ENCODE measurements at regions of chr14 and their contacts with region 1.

Region 1: GRCh38 chr14:93939304-93940229 is 12.4 kb downstream of the FAM181A start:
- DNase-seq: peak; percentile 93
- ATAC-seq: peak; percentile 90
- H3K4me3 Mint-ChIP-seq: peak overlapping the region; percentile 57
- H3K27ac Mint-ChIP-seq: no peak overlapping the region
- H3K4me1 Mint-ChIP-seq: peaks cover 10% of the 10 kb centered on the region
- H3K27me3 Mint-ChIP-seq: peaks cover 30% of the 10 kb centered on the region
- CTCF ChIP-seq: peak; percentile 92

Region 2: DNA sequence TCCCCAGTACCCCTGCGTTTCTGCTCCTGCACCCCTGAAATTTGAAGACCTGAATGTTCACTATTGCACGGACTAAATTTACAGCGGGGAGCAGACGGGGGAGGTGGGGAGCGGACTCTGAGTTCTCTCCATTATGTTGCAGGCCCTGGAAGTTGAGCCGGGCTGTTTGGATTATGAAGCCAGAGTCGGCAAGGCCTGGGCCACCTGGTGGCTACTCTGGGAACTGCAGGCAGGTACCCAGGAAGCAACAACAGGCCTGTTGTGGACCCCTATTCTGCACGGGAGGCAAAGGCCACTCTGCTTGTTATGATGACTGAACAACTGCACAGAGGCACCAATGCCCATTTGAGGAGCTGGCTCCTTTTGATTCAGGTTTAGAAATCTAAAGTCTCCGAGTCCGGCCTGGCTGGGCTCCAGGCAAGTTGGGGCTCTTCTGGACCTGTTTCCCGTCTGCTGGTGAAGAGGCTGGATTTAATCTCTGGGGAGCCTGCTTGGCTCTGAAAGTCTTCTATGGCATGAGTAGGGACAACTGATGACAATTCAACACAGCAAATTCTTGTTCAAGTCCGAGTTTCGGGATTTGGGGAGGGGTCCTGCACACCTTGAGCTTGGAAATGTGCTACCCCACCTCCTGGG is 46.5 kb before region 1 on chr14:
- CTCF ChIA-PET with region 1: interaction called, 13 read pairs
- POLR2A ChIA-PET with region 1: no interaction called
- DNase-seq: peak; percentile 93
- ATAC-seq: peak; percentile 68
- H3K4me3 Mint-ChIP-seq: no peak overlapping the region
- H3K27ac Mint-ChIP-seq: no peak overlapping the region
- H3K4me1 Mint-ChIP-seq: peaks cover 43% of the 10 kb centered on the region
- H3K27me3 Mint-ChIP-seq: peaks cover 3% of the 10 kb centered on the region
- CTCF ChIP-seq: peak; percentile 100

Region 3: DNA sequence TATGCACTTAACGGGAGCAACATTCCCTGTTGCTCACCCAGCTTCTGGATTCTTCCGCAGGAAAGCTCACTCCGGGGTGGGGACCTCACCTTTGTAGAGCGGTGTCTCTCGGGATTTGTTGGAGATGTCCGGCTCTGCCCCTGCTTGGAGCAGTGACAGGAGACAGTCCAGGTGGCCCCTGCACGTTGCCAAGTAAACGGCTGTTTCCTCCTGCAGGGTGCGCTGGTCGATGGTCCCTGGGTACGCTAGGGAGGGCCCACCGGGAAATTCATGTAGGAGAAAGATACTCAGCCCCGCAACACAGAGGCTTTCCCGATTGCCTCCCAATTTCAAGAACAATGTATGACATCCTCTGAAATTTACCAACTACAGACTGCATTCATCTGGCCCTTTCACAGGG is 13.7 kb after region 1 on chr14:
- CTCF ChIA-PET with region 1: interaction called, 66 read pairs
- POLR2A ChIA-PET with region 1: no interaction called
- DNase-seq: peak; percentile 50
- ATAC-seq: peak; percentile 79
- H3K4me3 Mint-ChIP-seq: no peak overlapping the region
- H3K27ac Mint-ChIP-seq: no peak overlapping the region
- H3K4me1 Mint-ChIP-seq: peaks cover 26% of the 10 kb centered on the region
- H3K27me3 Mint-ChIP-seq: no peaks in the 10 kb centered on the region
- CTCF ChIP-seq: no peak

Region 4: GRCh38 chr14:93984987-93985410 is 45.4 kb after region 1 on chr14:
- CTCF ChIA-PET with region 1: interaction called, 71 read pairs
- POLR2A ChIA-PET with region 1: no interaction called
- DNase-seq: peak; percentile 50
- ATAC-seq: peak; percentile 68
- H3K4me3 Mint-ChIP-seq: no peak overlapping the region
- H3K27ac Mint-ChIP-seq: no peak overlapping the region
- H3K4me1 Mint-ChIP-seq: peaks cover 17% of the 10 kb centered on the region
- H3K27me3 Mint-ChIP-seq: no peaks in the 10 kb centered on the region; the same call in 1 of the 2 replicates
- CTCF ChIP-seq: no peak

Region 5: GRCh38 chr14:94021001-94021400 is 81.4 kb after region 1 on chr14:
- CTCF ChIA-PET with region 1: interaction called, 34 read pairs
- POLR2A ChIA-PET with region 1: interaction called, 3 read pairs
- DNase-seq: no peak
- ATAC-seq: no peak
- H3K4me3 Mint-ChIP-seq: no peak overlapping the region
- H3K27ac Mint-ChIP-seq: no peak overlapping the region; the same call in 1 of the 2 replicates
- H3K4me1 Mint-ChIP-seq: peaks cover 34% of the 10 kb centered on the region
- H3K27me3 Mint-ChIP-seq: no peaks in the 10 kb centered on the region
- CTCF ChIP-seq: no peak

Region 6: DNA sequence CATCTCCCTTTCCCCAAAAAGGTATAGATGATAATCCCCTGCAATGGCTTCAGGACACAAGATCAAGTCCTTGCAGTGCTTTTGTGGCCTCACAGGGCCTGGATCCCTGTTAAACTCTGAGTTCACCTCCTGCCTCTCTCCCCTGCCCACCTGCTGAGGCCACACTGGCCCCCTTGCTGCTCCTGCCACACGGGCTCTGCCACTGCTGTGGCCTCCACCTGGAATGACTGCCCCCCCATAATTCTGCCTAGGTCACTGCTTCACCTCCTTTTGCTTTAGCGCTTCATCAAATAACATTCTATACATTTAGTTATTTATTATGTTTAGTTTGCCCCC is 170.3 kb after region 1 on chr14:
- CTCF ChIA-PET with region 1: no interaction called
- POLR2A ChIA-PET with region 1: no interaction called
- DNase-seq: no peak
- ATAC-seq: no peak
- H3K4me3 Mint-ChIP-seq: no peak overlapping the region
- H3K27ac Mint-ChIP-seq: no peak overlapping the region
- H3K4me1 Mint-ChIP-seq: peaks cover 14% of the 10 kb centered on the region; the same call in 1 of the 2 replicates
- H3K27me3 Mint-ChIP-seq: no peaks in the 10 kb centered on the region
- CTCF ChIP-seq: no peak

Region 7: DNA sequence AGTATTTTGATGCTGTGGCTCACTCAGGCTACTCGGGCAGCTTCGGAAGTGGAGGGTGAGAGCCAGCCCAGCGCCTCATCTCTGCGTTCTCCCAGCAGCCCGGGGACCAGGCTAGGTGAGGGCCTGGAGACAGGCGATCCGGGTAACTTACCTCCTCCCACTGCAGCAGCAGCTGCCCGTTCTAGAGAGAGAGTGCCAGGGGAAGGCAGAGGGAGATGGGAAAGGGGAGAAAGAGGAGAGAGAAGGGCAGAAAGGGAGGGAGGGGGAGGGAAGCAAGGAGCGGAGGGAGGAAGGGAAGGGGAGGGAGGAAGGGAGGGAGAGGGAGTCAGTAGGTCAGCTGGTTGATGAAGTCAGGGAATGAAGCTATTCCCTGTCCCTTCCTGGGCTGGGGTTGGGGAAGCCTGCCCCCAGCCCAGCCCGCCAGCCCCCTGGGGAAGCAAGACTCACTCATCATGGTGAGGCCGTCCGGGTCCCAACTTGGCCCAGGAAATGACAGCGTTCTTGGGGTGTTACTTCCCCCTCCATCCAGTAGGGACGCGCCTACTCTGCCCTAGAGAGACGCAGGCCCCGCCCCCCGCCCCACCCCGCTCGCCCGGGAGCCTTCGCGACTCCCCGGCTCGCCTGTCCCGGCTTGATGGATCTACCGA is 189.7 kb after region 1 on chr14 and contains the start of gene IFI27L2:
- CTCF ChIA-PET with region 1: interaction called, 15 read pairs
- POLR2A ChIA-PET with region 1: no interaction called
- DNase-seq: peak; percentile 76
- ATAC-seq: peak; percentile 86
- H3K4me3 Mint-ChIP-seq: peak within 1 kb of the TSS; percentile 75
- H3K27ac Mint-ChIP-seq: peak within 1 kb of the TSS; percentile 86
- H3K4me1 Mint-ChIP-seq: peaks cover 11% of the 10 kb centered on the region
- H3K27me3 Mint-ChIP-seq: peaks cover 8% of the 10 kb centered on the region
- CTCF ChIP-seq: peak; percentile 19; the same call in 1 of the 2 replicates
- total RNA-seq, gene IFI27L2: 22.1 to 37.2 TPM (median 35.5 TPM) in 3 replicates